Right cardiac atrium (tissue), 5 donors: ENCODE measurements at regions of chr16 and their contacts with region 1.

Region 1: GRCh38 chr16:24499193-24499814 is 40.1 kb upstream of the RBBP6 start:
- DNase-seq: no peak
- ATAC-seq: no peak
- H3K4me3 ChIP-seq: no peak overlapping the region
- H3K27ac ChIP-seq: no peak overlapping the region
- H3K4me1 ChIP-seq: no peaks in the 10 kb centered on the region
- H3K27me3 ChIP-seq: no peaks in the 10 kb centered on the region

Region 2: DNA sequence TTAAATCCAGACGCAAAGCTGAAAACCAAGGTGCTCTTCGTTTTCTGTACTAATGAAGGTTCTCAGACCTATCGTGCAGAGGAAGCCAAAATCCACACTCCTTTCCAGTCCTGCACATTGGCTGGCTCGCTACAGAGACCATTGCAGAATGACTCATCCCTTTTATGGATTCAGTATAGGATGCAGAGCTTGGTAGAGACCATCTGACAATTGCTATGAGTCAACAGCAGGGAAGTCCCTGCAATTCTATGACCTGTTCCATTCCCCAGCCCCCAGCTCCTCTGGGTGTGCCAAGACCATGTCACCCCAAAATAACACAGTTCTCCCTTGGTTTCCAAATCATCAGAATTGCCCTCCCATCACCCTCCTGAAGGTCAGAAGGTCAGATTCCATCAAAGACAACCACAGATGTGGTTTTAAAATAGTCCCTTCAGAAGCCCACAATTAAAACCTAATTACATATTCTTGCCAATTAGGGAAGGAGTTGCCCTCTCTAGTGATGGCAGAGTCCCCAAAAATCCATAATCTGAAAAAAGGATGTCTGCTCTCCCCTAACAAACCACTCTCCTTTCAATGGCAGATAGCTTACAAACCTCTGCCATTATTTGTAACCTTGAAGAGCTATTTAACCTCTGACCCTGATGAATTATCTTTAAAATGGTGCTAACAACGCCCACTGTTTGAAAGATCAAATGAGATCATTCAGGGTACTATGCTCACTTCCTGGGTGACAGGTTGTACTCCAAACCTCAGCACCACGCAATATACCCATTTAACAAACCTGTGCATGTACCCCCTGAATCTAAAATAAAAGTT is 68.2 kb before region 1 on chr16:
- intact Hi-C with region 1: loop called in 1 of 4 experiments (anchors 10 kb)
- DNase-seq: no peak
- ATAC-seq: no peak
- H3K4me3 ChIP-seq: no peak overlapping the region
- H3K27ac ChIP-seq: no peak overlapping the region
- H3K4me1 ChIP-seq: no peaks in the 10 kb centered on the region
- H3K27me3 ChIP-seq: no peaks in the 10 kb centered on the region